Activated T-helper 2 cell treated with anti-CD3 and anti-CD28 coated beads, Interferon-gamma antibody, Interleukin-2, Interleukin-4, amounts not matched to agents 10 μg/mL and 5 μg/mL and 100 μg/mL, durations not matched to agents 14 hours and 24 hours and 36 hours (primary cell): ENCODE measurements at regions of chr5 and their contacts with region 1.

Region 1: GRCh38 chr5:126438267-126438666 is 15.1 kb downstream of the GRAMD2B start:
- DNase-seq: no peak
- H3K4me3 Mint-ChIP-seq: no peak overlapping the region
- H3K27ac Mint-ChIP-seq: peak overlapping the region; percentile 15
- H3K4me1 Mint-ChIP-seq: peaks cover 19% of the 10 kb centered on the region
- H3K27me3 Mint-ChIP-seq: no peaks in the 10 kb centered on the region

Region 2: DNA sequence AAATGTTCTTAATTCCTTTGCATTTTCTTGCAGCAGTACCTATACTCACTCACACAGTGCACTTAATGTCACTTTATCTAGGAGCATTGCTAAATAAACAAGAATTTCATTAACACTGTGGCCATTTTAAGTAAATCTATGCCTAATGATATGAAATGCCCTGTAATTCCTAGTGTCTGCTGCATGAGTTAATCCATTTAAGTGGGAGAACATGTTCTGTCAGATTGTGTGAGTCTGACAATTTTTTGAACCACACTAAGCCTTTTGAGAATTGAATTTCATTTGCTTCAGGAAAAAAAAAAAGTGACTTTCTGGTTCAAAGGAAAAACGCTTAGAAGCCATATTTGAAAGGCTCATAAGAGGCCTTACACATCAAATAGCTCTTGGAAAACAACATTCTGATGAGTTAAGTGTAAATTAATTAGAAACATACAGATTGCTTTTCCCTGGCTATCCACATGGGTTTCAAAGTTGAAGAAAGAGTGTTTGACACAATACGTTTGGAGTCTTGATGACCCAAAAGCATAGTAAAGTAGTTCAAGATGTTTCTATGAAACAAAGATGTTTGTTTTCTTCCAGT is 461.8 kb before region 1 on chr5:
- intact Hi-C with region 1: no loop called
- DNase-seq: no peak
- H3K4me3 Mint-ChIP-seq: no peak overlapping the region
- H3K27ac Mint-ChIP-seq: no peak overlapping the region
- H3K4me1 Mint-ChIP-seq: no peaks in the 10 kb centered on the region
- H3K27me3 Mint-ChIP-seq: no peaks in the 10 kb centered on the region

Region 3: GRCh38 chr5:126365465-126366200 is 72.6 kb before region 1 on chr5:
- intact Hi-C with region 1: loop called (anchors 1 kb)
- DNase-seq: no peak
- H3K4me3 Mint-ChIP-seq: no peak overlapping the region
- H3K27ac Mint-ChIP-seq: no peak overlapping the region
- H3K4me1 Mint-ChIP-seq: peaks cover 5% of the 10 kb centered on the region
- H3K27me3 Mint-ChIP-seq: peaks cover 5% of the 10 kb centered on the region

Region 4: DNA sequence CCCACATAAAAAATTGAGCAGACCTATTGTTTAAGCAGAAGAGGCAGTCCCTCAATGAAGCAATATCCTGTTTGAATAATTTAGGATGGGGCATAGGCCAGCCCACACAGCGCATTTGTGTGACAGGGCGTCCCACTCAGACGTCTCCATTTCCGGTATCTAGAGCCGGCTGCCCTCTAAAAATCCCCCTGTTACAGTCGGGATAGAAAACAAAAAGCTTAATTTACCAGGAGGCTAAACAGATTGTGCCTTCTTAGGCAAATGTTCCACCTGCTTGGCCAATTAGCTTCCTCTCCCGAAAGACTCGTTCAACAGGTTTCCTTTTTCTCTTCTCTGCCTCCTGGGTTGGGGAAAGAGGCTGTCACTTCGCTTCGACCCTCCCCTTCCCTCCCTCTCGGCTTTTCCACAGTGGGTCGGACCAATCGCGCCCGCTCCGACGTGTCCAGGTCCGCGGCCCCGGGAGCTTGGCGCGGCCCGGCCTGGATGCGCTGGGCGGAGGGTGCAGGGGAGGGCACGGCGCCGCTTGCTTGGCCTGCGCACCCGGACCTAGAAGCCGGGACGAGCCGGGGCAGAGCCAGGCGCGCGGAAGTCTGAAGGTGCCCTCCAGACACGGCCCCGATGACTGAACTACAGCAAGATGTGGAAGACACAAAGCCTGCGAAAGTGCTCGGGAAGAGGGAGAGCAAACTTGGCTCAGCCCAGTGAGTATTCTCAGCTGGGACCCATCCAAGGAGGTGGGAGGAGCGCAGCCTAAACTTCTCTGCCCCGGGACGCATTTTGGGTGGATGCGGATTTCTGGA is 15.1 kb before region 1 on chr5 and contains the start of gene GRAMD2B:
- intact Hi-C with region 1: loop called (anchors 2 kb)
- DNase-seq: peak; percentile 58
- H3K4me3 Mint-ChIP-seq: peak within 1 kb of the TSS; percentile 89
- H3K27ac Mint-ChIP-seq: peak within 1 kb of the TSS; percentile 85
- H3K4me1 Mint-ChIP-seq: peaks cover 29% of the 10 kb centered on the region
- H3K27me3 Mint-ChIP-seq: no peaks in the 10 kb centered on the region
- total RNA-seq, gene GRAMD2B: 8.4 and 8.8 TPM in 2 replicates

Region 5: GRCh38 chr5:126615286-126615685 is 177.0 kb after region 1 on chr5:
- intact Hi-C with region 1: no loop called
- DNase-seq: no peak
- H3K4me3 Mint-ChIP-seq: no peak overlapping the region
- H3K27ac Mint-ChIP-seq: no peak overlapping the region
- H3K4me1 Mint-ChIP-seq: peaks cover 5% of the 10 kb centered on the region
- H3K27me3 Mint-ChIP-seq: no peaks in the 10 kb centered on the region